Activated CD8-positive, alpha-beta T cell treated with anti-CD3 and anti-CD28 coated beads for 36 hours (primary cell): ENCODE measurements at regions of chr12 and their contacts with region 1.

Region 1: DNA sequence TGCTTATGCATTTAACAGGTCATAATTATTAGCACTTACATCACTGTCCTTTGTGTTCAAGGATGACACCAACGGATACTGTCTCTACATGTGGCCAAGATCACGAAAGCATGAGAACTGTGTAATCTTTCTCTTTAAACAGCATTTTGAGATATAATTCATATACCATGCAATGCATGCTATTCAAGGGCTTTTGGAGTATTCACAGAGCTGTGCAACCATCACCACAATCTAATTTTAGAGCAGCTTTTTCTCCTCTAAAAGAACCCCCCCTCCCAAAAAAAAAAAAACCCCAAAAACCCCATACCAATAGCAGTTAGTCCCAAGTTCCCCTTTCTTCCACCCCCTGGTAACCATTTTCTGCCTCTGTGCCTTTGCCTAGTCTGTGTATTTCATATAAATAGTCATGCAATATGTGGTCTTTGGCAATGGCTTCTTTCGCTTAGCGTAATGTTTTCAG is 60.6 kb downstream of the SPRING1 start:
- DNase-seq: no peak
- ATAC-seq: no peak
- H3K4me3 Mint-ChIP-seq: no peak overlapping the region
- H3K27ac Mint-ChIP-seq: no peak overlapping the region
- H3K4me1 Mint-ChIP-seq: peaks cover 31% of the 10 kb centered on the region
- H3K27me3 Mint-ChIP-seq: no peaks in the 10 kb centered on the region
- CTCF ChIP-seq: no peak

Region 2: GRCh38 chr12:116236148-116236731 is 441.0 kb before region 1 on chr12:
- CTCF ChIA-PET with region 1: no interaction called
- POLR2A ChIA-PET with region 1: no interaction called
- intact Hi-C with region 1: no loop called
- DNase-seq: peak; percentile 70
- ATAC-seq: peak; percentile 71
- H3K4me3 Mint-ChIP-seq: peak overlapping the region; percentile 53
- H3K27ac Mint-ChIP-seq: peak overlapping the region; percentile 85
- H3K4me1 Mint-ChIP-seq: peaks cover 40% of the 10 kb centered on the region
- H3K27me3 Mint-ChIP-seq: no peaks in the 10 kb centered on the region
- CTCF ChIP-seq: peak; percentile 64

Region 3: GRCh38 chr12:116657921-116658495 is 19.2 kb before region 1 on chr12:
- CTCF ChIA-PET with region 1: no interaction called
- POLR2A ChIA-PET with region 1: no interaction called
- intact Hi-C with region 1: loop called (anchors 1 kb)
- DNase-seq: no peak
- ATAC-seq: no peak
- H3K4me3 Mint-ChIP-seq: no peak overlapping the region
- H3K27ac Mint-ChIP-seq: no peak overlapping the region
- H3K4me1 Mint-ChIP-seq: no peaks in the 10 kb centered on the region
- H3K27me3 Mint-ChIP-seq: peaks cover 3% of the 10 kb centered on the region
- CTCF ChIP-seq: no peak

Region 4: GRCh38 chr12:116765271-116765670 is 88.0 kb after region 1 on chr12:
- CTCF ChIA-PET with region 1: no interaction called
- POLR2A ChIA-PET with region 1: no interaction called
- intact Hi-C with region 1: no loop called
- DNase-seq: no peak
- ATAC-seq: no peak
- H3K4me3 Mint-ChIP-seq: no peak overlapping the region
- H3K27ac Mint-ChIP-seq: no peak overlapping the region
- H3K4me1 Mint-ChIP-seq: no peaks in the 10 kb centered on the region
- H3K27me3 Mint-ChIP-seq: no peaks in the 10 kb centered on the region
- CTCF ChIP-seq: no peak